Posterior cingulate gyrus (tissue), 11 donors: ENCODE measurements at regions of chr20 and their contacts with region 1.

Region 1: DNA sequence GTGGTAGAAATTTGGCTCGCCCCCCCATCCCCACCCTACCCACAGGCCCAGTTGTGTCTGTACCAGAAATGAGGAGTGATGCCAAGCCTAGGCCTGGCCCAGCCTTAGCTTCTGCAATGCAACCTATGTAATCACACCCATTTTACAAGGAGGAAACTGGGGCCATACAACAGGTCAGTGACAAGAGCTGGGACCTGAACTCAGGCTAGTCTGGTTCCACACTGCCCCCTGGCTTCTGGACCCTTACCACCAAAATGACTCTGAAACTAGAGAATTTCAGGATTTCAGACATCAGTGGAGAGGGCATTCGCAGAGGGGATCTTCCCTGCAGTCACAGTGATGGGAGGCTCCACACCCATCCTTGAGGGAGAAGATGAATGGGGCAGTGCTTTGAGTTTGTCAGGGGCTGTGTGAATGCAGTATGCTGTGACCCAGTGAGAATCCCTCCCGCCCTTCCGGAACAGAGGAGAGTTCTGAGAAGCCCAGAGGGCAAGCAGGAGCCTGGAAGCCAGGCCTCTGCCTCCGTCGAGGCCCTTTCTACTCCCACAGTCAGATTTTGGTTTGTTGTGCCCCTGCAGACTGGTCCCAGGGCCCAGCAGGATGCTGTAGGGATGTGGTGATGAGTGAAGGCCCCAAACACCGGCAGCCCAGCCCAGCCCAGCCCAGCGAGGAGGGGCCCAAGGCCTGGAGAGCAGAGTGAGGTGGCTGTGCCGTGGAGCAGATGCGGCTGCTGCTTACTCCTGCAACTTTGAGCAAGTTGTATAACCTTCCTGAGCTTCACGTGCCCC is 48.1 kb upstream of the MYL9 start:
- DNase-seq: peak in 3 of 10 donors; percentile 28 to 70 (median 31)

Region 2: DNA sequence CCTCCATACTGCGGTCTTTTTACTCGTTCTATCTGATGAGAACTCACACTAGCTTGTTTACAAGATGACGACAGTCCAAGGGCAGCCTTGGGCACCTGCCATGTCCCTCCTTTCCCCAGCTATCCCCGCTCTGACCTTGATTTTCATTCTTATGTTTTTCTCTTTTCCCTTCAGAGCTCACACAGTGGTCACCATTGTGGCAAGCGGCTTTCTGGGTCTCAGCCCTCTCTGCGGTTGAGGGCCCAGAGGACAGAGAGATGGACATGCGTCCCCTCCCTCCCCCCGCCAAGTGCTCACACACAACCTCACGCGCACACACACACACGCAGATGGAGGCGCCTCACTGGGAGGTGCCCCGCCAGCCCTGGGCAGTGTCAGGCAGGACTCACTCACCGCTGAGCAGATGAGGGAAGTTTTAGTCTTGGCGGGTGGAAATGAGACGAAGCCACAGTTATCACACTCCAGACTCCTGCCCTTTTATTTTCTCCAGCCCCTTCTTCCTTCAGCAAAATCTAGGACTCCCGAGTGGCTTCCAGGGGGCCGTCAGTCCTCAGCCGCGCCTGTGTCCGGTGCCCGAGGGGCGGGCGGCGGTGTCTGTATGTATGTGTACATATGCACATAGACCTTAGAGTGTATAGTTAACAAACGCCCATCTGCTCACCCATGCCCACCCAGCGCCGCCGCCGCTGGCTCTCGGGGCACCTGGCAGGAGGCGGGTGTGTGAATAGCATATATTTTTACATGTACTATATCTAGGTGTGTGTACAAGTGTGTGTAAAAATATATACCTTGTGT is 34.3 kb after region 1 on chr20:
- intact Hi-C with region 1: loop called (anchors 2 kb)
- DNase-seq: peak in 1 of 10 donors; percentile 89